ENCODE measurements at regions of chr4 and their contacts with region 1.

Region 1: DNA sequence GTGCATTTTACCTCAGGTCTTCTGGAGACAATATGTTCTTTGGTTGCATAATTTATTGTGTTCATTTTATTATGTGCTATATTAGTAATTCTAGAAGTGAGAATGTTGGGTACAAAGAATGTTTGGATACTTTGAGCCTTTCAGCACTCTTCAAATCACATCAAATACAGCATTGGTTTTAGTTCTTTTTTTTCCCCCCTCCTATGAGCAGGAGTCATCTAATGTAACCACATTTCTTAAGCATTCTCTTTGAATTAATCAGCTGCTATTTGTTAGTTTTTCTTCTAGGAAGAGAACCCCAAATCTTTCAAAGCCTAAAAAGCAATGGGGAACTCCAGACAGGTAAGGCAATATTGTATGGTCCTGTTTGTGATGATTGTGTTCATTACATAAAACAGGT is 46.7 kb downstream of the ARL9 start:
- DNase-seq: no peak
- ATAC-seq: no peak
- H3K4me3 ChIP-seq: no peak overlapping the region
- H3K4me1 ChIP-seq: no peaks in the 10 kb centered on the region
- CTCF ChIP-seq: no peak

Region 2: DNA sequence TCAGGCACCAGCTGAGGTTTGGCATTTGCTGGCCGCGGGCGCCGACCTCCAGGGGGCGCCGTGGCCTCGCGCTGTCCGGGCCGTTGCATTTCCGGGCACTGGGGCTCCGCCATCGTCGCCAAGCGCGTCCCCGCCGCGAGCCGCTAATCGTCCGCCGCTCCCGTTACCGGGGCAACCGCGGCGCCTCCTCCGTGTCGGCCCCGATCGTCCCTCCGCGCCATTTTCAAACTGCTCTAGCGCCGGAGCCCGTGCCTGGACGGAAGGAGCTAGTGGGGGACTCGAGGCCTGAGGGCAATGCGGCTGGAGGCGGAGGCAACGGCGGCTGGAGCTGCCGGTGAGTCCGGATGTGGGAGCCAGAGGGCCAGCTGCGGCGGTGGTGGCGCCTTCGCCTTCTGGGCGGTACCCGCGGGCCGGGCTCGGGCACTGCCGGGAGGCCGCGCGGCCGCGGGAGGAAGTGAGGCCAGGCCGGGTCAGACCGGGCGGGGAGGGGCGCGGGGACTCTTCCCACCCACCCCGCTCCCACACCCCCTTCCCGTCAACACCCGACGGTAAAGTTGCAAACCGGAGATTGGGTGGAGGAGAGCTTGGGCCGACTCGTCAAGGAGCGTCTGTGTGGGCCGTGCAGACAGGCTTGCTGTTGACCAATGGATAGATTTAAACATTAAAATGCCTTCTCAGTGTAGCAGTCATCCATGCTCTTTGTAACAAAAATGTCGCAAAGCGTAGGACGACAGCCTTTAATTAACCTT is 603.4 kb before region 1 on chr4 and contains the start of gene CEP135:
- intact Hi-C with region 1: no loop called
- DNase-seq: peak; percentile 94 to 97 (median 97)
- ATAC-seq: peak; percentile 95
- H3K4me3 ChIP-seq: peak within 1 kb of the TSS; percentile 64
- H3K4me1 ChIP-seq: peaks cover 7% of the 10 kb centered on the region
- CTCF ChIP-seq: peak; percentile 98
- total RNA-seq, gene CEP135: 3.8 to 6.9 (median 5.9) TPM

Region 3: GRCh38 chr4:56435306-56435926 is 116.9 kb before region 1 on chr4 and contains the start of gene PPAT:
- intact Hi-C with region 1: no loop called
- DNase-seq: peak; percentile 99
- ATAC-seq: peak; percentile 92
- H3K4me3 ChIP-seq: peak within 1 kb of the TSS; percentile 46
- H3K4me1 ChIP-seq: peaks cover 3% of the 10 kb centered on the region
- CTCF ChIP-seq: peak; percentile 58
- total RNA-seq, gene PPAT: 4.7 to 7.9 (median 7.5) TPM

Region 4: DNA sequence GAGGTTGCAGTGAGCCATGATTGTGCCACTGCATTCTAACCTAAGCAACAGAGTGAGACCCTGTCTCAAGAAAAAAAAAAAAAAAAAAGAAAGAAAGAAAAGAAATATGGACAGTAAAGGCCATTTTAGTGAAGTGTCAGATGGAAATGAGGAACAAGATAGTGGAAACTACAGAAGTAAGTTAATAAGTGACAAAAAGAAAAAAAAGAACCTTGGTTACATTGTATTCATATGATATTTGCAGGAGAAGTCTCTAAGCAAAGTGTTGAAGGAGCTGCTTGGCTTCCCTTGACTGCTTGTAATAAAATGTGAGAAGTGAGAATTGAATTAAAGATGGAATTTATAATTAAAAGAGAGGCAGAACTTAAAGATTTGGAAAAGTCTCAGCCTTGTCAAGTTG is 55.7 kb after region 1 on chr4:
- intact Hi-C with region 1: loop called in 1 of 2 experiments (anchors 10 kb)
- DNase-seq: no peak
- ATAC-seq: no peak
- H3K4me3 ChIP-seq: no peak overlapping the region
- H3K4me1 ChIP-seq: no peaks in the 10 kb centered on the region
- CTCF ChIP-seq: no peak

Region 5: GRCh38 chr4:56630876-56631666 is 78.8 kb after region 1 on chr4:
- intact Hi-C with region 1: no loop called
- DNase-seq: no peak
- ATAC-seq: no peak
- H3K4me3 ChIP-seq: no peak overlapping the region
- H3K4me1 ChIP-seq: no peaks in the 10 kb centered on the region
- CTCF ChIP-seq: no peak

Measured in mucosa of descending colon (tissue), 3 donors.